Heart left ventricle (tissue), 16 donors: ENCODE measurements at regions of chr9 and their contacts with region 1.

Region 1: GRCh38 chr9:86637515-86637914 is 283.3 kb upstream of the TUT7 start:
- DNase-seq: peak in 3 of 5 donors; percentile 22 to 40 (median 24)
- ATAC-seq: peak in 2 of 4 donors; percentile 43 to 57
- H3K4me3 ChIP-seq: no peak overlapping the region
- H3K27ac ChIP-seq: no peak overlapping the region
- H3K4me1 ChIP-seq: no peaks in the 10 kb centered on the region
- H3K27me3 ChIP-seq: peaks cover 0 to 12% (median 0%) of the 10 kb centered on the region in 9 donors
- CTCF ChIP-seq: peak; percentile 25 to 63 (median 38)
- POLR2A ChIP-seq: no peak

Region 2: GRCh38 chr9:86687788-86688187 is 50.3 kb after region 1 on chr9:
- intact Hi-C with region 1: loop called in 1 of 10 experiments (anchors 5 kb)
- DNase-seq: no peak
- ATAC-seq: no peak
- H3K4me3 ChIP-seq: no peak overlapping the region
- H3K27ac ChIP-seq: no peak overlapping the region
- H3K4me1 ChIP-seq: no peaks in the 10 kb centered on the region
- H3K27me3 ChIP-seq: no peaks in the 10 kb centered on the region
- CTCF ChIP-seq: no peak
- POLR2A ChIP-seq: no peak

Region 3: DNA sequence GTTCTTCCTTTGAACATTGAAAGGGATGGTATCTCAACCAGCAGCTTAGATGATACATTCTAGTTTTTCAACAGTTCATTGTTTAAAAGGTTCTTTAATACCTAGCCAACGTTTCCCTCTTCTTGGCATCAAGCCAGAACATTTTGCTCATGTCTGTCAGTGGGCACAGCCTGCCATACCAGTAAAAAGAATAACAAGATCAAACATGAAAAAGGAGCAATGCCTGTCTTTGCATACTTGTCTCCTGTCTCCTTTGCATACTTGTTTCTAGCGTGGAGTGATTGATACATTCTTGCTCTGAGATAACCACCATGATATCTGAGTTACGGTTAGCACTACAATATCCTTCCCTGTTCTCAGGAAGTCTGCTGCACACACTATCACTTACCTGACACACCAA is 611.5 kb after region 1 on chr9:
- intact Hi-C with region 1: no loop called
- DNase-seq: no peak
- ATAC-seq: no peak
- H3K4me3 ChIP-seq: no peak overlapping the region
- H3K27ac ChIP-seq: no peak overlapping the region
- H3K4me1 ChIP-seq: no peaks in the 10 kb centered on the region
- H3K27me3 ChIP-seq: peaks cover 0 to 6% (median 0%) of the 10 kb centered on the region in 9 donors
- CTCF ChIP-seq: no peak
- POLR2A ChIP-seq: no peak